Activated CD4-positive, alpha-beta memory T cell treated with anti-CD3 and anti-CD28 coated beads for 36 hours (primary cell): ENCODE measurements at regions of chr9 and their contacts with region 1.

Region 1: GRCh38 chr9:109320742-109321448 is at the start of gene EPB41L4B:
- DNase-seq: peak; percentile 93
- H3K4me3 Mint-ChIP-seq: peak within 1 kb of the TSS; percentile 60
- H3K27ac Mint-ChIP-seq: no peak within 1 kb of the TSS
- H3K4me1 Mint-ChIP-seq: peaks cover 8% of the 10 kb centered on the region
- H3K27me3 Mint-ChIP-seq: peaks cover 48% of the 10 kb centered on the region
- total RNA-seq, gene EPB41L4B: 0.17 to 0.21 TPM

Region 2: DNA sequence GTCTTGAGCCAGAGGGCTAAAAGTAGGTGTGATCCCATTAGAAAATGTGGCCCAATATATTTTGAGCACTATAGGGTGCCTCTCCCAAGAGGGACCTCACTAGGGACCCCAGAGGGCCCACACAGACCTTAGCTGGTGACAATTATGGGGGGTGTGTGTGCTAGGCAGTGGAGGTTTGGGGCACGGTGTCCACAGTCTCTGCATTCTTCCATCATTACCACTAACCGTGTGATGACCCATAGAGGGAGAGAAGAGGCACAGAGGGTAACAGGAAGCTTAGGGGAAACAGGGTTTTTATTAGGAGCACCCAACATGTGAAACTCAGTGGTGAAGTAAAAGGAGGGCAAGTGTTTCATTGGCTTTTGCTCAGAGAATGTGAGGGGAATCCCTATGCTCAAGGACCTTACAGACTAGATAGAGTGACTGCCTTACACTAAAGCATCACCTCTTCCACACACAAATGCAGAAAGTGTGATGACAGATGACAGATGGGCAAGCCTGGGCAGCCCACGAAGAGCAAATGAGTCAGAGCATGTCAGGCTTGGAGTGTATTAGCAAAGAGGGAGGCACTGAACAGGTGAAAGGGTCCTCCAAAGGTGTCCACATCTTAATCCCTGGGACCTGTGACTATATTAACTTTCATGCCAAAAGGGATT is 461.3 kb before region 1 on chr9:
- CTCF ChIA-PET with region 1: no interaction called
- POLR2A ChIA-PET with region 1: no interaction called
- intact Hi-C with region 1: loop called (anchors 10 kb)
- DNase-seq: no peak
- H3K4me3 Mint-ChIP-seq: no peak overlapping the region
- H3K27ac Mint-ChIP-seq: no peak overlapping the region
- H3K4me1 Mint-ChIP-seq: no peaks in the 10 kb centered on the region
- H3K27me3 Mint-ChIP-seq: no peaks in the 10 kb centered on the region

Region 3: GRCh38 chr9:108933718-108934322 is 387.1 kb before region 1 on chr9 and contains the start of gene ELP1:
- CTCF ChIA-PET with region 1: no interaction called
- POLR2A ChIA-PET with region 1: no interaction called
- intact Hi-C with region 1: loop called (anchors 1 kb)
- DNase-seq: peak; percentile 95
- H3K4me3 Mint-ChIP-seq: peak within 1 kb of the TSS; percentile 95
- H3K27ac Mint-ChIP-seq: peak within 1 kb of the TSS; percentile 92
- H3K4me1 Mint-ChIP-seq: peaks cover 25% of the 10 kb centered on the region
- H3K27me3 Mint-ChIP-seq: no peaks in the 10 kb centered on the region
- total RNA-seq, gene ELP1: 25.5 to 29.2 TPM

Region 4: DNA sequence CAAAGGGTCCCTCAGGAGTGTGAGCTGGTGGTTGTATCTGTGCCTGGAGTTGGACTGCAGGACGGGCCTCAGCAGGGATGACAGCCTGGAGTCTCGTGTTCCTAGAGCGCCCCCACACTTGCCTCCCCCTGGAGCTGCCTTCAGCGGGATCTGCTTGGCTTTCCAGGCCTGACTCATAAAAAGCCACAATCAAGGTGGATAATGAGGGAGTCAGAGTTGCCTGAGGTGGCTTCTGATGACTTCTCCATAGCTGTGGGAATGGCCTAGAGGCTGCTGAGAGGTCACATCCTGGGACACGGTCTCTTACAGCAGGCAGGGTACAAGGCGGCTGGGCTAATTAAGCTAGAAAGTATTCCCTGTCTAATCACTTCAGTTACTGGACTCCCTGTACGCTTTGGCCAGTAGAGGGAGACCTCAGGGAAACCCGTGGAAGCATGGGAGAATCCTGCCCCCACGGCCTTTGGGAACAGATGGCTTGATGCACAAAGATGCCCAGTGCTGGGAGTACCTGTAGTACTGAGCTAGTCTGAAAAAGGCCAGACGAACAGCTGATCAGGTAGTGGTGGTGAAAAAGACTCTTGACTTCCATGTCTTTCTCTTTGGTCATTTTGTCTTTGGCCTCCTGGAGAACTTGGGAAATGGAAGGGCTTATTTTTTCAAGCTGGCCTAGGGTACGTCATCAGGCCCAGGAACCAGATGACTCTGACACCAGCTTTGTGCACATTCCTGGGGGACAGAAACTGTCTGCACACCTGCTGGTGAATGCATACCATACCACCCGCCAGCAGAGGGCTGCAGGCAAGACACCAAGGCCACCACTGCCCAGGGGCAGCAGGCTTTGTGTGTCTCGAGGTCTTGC is 137.7 kb before region 1 on chr9:
- CTCF ChIA-PET with region 1: no interaction called
- POLR2A ChIA-PET with region 1: no interaction called
- intact Hi-C with region 1: loop called (anchors 10 kb)
- DNase-seq: peak; percentile 24
- H3K4me3 Mint-ChIP-seq: no peak overlapping the region
- H3K27ac Mint-ChIP-seq: no peak overlapping the region
- H3K4me1 Mint-ChIP-seq: peaks cover 11% of the 10 kb centered on the region
- H3K27me3 Mint-ChIP-seq: peaks cover 7% of the 10 kb centered on the region

Region 5: GRCh38 chr9:109244157-109245132 is 76.5 kb before region 1 on chr9:
- CTCF ChIA-PET with region 1: interaction called, 3 read pairs
- POLR2A ChIA-PET with region 1: no interaction called
- intact Hi-C with region 1: loop called (anchors 1 kb)
- DNase-seq: peak; percentile 77
- H3K4me3 Mint-ChIP-seq: no peak overlapping the region
- H3K27ac Mint-ChIP-seq: no peak overlapping the region
- H3K4me1 Mint-ChIP-seq: peaks cover 2% of the 10 kb centered on the region
- H3K27me3 Mint-ChIP-seq: peaks cover 22% of the 10 kb centered on the region

Region 6: DNA sequence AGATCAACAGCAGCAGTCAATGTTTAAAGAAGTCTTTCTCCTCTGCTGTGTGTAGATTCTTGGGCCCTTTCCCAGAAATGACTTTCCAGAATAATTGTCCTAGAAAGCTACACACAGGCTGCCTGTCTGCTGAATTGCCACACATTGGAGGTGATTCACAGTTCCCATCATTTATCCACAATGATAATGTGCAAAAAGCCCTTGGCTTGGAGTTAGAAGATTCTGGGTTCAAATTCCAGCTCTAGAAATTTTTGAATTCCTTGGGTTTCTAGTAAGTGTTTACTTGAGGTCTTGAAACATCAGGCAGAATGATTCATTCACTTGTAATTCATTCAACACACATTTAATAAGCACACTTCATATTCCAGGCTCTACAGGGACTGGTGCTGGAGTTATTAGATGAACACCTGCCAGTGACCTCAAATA is 28.5 kb after region 1 on chr9:
- CTCF ChIA-PET with region 1: no interaction called
- POLR2A ChIA-PET with region 1: no interaction called
- intact Hi-C with region 1: no loop called
- DNase-seq: no peak
- H3K4me3 Mint-ChIP-seq: no peak overlapping the region
- H3K27ac Mint-ChIP-seq: no peak overlapping the region
- H3K4me1 Mint-ChIP-seq: no peaks in the 10 kb centered on the region
- H3K27me3 Mint-ChIP-seq: peaks cover 2% of the 10 kb centered on the region

Region 7: DNA sequence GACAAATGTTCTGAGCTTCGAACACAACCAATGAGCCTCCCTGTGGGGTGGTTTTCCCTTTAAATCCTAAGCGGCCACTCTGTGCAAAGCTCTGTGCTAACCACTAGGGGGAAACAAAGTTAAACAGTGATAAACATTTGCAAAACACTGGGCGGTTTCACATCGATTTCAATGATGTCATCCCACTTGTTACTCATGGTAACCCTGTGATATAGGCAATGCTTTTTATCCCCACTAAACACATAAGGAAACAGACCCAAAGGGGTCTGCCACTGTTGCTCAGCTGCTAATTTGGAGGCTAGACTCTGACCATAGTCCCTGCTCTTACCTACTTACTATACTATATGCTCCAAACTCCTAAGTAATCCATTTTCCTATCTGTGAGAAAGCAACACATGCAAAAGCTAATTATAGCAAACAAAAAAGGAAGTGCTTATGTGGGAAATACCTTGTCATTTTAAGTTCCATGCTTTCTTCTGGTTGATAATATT is 119.9 kb after region 1 on chr9:
- CTCF ChIA-PET with region 1: no interaction called
- POLR2A ChIA-PET with region 1: no interaction called
- intact Hi-C with region 1: no loop called
- DNase-seq: peak; percentile 63
- H3K4me3 Mint-ChIP-seq: no peak overlapping the region
- H3K27ac Mint-ChIP-seq: no peak overlapping the region
- H3K4me1 Mint-ChIP-seq: peaks cover 15% of the 10 kb centered on the region
- H3K27me3 Mint-ChIP-seq: peaks cover 8% of the 10 kb centered on the region